PC-3 (cell line): ENCODE measurements at regions of chr4 and their contacts with region 1.

Region 1: GRCh38 chr4:177250056-177250696 is 59.5 kb upstream of the NEIL3 start:
- DNase-seq: peak; percentile 69
- ATAC-seq: peak; percentile 88
- H3K4me3 ChIP-seq: no peak overlapping the region
- H3K27ac ChIP-seq: no peak overlapping the region
- H3K4me1 ChIP-seq: peaks cover 16% of the 10 kb centered on the region; the same call in 1 of the 2 replicates
- H3K27me3 ChIP-seq: no peaks in the 10 kb centered on the region
- CTCF ChIP-seq: peak; percentile 90

Region 2: GRCh38 chr4:176436293-176436973 is 813.7 kb before region 1 on chr4:
- CTCF ChIA-PET with region 1: no interaction called
- POLR2A ChIA-PET with region 1: no interaction called
- intact Hi-C with region 1: no loop called
- DNase-seq: peak; percentile 74
- ATAC-seq: peak; percentile 84
- H3K4me3 ChIP-seq: no peak overlapping the region
- H3K27ac ChIP-seq: peak overlapping the region; percentile 72
- H3K4me1 ChIP-seq: peaks cover 21% of the 10 kb centered on the region
- H3K27me3 ChIP-seq: no peaks in the 10 kb centered on the region
- CTCF ChIP-seq: no peak

Region 3: DNA sequence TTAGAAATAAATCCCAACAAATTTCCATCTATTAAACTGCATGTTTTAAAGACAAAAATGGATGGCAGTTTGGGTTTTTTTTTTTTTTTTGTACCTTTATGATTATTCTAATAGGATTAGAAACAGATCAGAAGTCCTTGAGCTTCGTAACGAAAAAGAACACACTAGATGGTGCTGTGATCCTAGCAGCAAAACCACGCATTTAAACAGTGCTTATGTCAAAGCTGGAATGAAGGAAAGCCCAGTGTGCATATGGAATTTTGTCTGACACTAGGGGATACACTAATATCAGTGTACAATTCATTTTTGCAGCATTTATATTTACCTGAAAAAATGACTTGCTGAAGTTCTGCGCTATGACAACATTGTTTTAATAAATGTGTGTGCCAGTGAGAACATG is 686.6 kb before region 1 on chr4:
- CTCF ChIA-PET with region 1: no interaction called
- POLR2A ChIA-PET with region 1: no interaction called
- intact Hi-C with region 1: loop called (anchors 10 kb)
- DNase-seq: peak; percentile 54
- ATAC-seq: peak; percentile 53
- H3K4me3 ChIP-seq: no peak overlapping the region
- H3K27ac ChIP-seq: no peak overlapping the region
- H3K4me1 ChIP-seq: peaks cover 14% of the 10 kb centered on the region
- H3K27me3 ChIP-seq: no peaks in the 10 kb centered on the region
- CTCF ChIP-seq: peak; percentile 46